ENCODE measurements at regions of chr4 and their contacts with region 1.

Region 1: DNA sequence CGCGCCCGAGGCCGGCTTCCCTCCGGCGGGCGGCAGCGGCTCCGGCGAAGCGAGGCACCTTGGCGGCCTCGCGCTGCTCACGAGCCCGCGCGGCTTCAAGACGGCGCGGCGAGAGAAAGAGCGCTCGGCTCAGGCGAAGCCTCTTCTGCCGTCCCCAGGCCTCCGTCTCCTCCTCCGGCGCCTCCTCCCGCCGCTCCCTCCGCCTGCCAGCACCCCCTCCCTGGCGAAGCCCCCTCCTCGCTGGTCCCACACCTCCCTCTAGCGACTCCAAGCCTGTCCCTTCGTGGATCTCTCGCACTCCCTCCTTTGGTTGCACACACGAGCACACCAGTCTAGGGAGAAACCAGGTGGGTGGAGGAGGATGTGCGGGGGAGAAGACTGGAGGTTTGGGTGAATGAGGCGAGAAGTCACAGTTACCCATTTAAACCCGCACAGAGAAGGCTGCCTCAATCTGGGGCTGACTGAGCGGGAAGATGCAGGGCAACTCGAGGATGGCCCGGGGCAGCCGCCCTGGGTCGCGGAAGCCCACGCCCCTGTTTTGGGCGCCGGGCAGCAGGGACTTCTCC is at the start of gene CAMK2D:
- DNase-seq: peak; percentile 93
- H3K4me3 Mint-ChIP-seq: peak within 1 kb of the TSS; percentile 89
- H3K27ac Mint-ChIP-seq: peak within 1 kb of the TSS; percentile 93
- H3K4me1 Mint-ChIP-seq: peaks cover 38% of the 10 kb centered on the region
- H3K27me3 Mint-ChIP-seq: peaks cover 2% of the 10 kb centered on the region
- total RNA-seq, gene CAMK2D: 82.5 to 82.9 TPM

Region 2: DNA sequence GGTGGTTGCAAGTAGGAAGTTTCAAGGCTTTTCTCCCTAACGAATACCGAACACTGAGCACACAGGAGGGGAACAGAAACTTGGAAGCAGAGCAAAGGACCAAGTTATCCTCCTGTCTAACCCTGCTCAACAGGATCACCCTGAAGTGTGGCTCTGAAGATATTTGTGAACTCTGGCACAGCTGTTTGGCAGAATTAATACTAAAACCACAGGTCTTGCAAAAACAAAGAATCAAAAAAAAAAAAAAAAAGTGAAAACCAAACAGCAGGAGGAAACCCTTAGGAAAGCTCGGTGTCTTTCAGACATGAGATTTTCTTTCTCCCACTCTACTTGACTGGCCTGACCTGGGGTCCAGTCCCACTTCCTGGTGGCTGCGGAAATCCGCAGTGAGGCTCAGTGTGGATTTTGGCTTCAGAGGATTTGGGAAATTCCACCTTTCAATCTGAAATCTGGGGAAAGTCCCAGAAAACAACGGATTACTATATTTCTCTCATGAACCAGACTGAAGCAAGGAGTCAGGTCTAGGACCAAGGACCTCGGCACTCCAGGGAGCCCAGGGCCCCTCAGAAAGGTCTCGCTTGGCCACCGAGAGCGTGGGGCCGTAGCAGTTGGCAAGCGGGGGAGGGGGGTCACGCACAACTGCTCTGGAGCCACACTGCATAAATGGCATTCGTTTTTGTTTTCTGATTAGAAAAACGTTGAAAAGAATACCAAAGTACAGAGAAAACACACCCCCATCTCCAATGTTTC is 1476.9 kb before region 1 on chr4:
- CTCF ChIA-PET with region 1: no interaction called
- POLR2A ChIA-PET with region 1: no interaction called
- intact Hi-C with region 1: loop called (anchors 10 kb)
- DNase-seq: peak; percentile 39
- H3K4me3 Mint-ChIP-seq: peak overlapping the region; percentile 94
- H3K27ac Mint-ChIP-seq: peak overlapping the region; percentile 97
- H3K4me1 Mint-ChIP-seq: peaks cover 69% of the 10 kb centered on the region
- H3K27me3 Mint-ChIP-seq: no peaks in the 10 kb centered on the region

Region 3: GRCh38 chr4:113355550-113356371 is 405.9 kb before region 1 on chr4:
- CTCF ChIA-PET with region 1: no interaction called
- POLR2A ChIA-PET with region 1: no interaction called
- intact Hi-C with region 1: loop called (anchors 1 kb)
- DNase-seq: peak; percentile 88
- H3K4me3 Mint-ChIP-seq: peak overlapping the region; percentile 36
- H3K27ac Mint-ChIP-seq: peak overlapping the region; percentile 92
- H3K4me1 Mint-ChIP-seq: peaks cover 39% of the 10 kb centered on the region
- H3K27me3 Mint-ChIP-seq: peaks cover 45% of the 10 kb centered on the region

Region 4: DNA sequence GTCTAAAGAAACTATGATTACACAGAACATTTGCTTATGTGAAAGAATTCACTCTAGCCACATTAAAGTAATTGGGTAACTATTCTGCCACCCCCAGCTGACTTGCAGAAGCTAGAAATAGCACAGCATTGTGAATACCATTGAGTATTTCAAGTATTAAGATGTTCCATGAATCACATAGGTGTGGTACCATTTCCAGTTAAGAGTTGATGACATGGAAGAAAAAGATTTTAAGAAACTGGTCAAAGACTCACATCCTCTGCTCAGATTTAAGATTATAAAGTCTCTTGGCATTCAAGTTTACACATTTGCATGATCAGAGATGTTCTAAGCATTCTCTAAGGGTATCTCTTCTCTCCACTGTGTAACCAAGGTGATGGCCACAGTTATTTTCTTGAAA is 287.7 kb before region 1 on chr4:
- CTCF ChIA-PET with region 1: no interaction called
- POLR2A ChIA-PET with region 1: interaction called, 3 read pairs
- intact Hi-C with region 1: loop called (anchors 1 kb)
- DNase-seq: peak; percentile 39
- H3K4me3 Mint-ChIP-seq: no peak overlapping the region
- H3K27ac Mint-ChIP-seq: peak overlapping the region; percentile 84
- H3K4me1 Mint-ChIP-seq: peaks cover 51% of the 10 kb centered on the region
- H3K27me3 Mint-ChIP-seq: no peaks in the 10 kb centered on the region

Region 5: GRCh38 chr4:113636438-113636818 is 125.3 kb before region 1 on chr4:
- CTCF ChIA-PET with region 1: interaction called, 4 read pairs
- POLR2A ChIA-PET with region 1: no interaction called
- intact Hi-C with region 1: loop called (anchors 1 kb)
- DNase-seq: no peak
- H3K4me3 Mint-ChIP-seq: peak overlapping the region; percentile 21
- H3K27ac Mint-ChIP-seq: peak overlapping the region; percentile 75
- H3K4me1 Mint-ChIP-seq: peaks cover 41% of the 10 kb centered on the region
- H3K27me3 Mint-ChIP-seq: no peaks in the 10 kb centered on the region

Region 6: GRCh38 chr4:113823291-113823659 is 61.6 kb after region 1 on chr4:
- CTCF ChIA-PET with region 1: no interaction called
- POLR2A ChIA-PET with region 1: no interaction called
- intact Hi-C with region 1: loop called (anchors 1 kb)
- DNase-seq: peak; percentile 18
- H3K4me3 Mint-ChIP-seq: no peak overlapping the region
- H3K27ac Mint-ChIP-seq: no peak overlapping the region
- H3K4me1 Mint-ChIP-seq: peaks cover 45% of the 10 kb centered on the region
- H3K27me3 Mint-ChIP-seq: no peaks in the 10 kb centered on the region

Measured in activated CD4-positive, alpha-beta memory T cell treated with anti-CD3 and anti-CD28 coated beads for 36 hours (primary cell).